Esophagus squamous epithelium (tissue), 5 donors: ENCODE measurements at regions of chr1 and their contacts with region 1.

Region 1: GRCh38 chr1:8987881-8988617 is 38.2 kb downstream of the SLC2A7 start:
- DNase-seq: no peak
- H3K4me3 ChIP-seq: no peak overlapping the region
- H3K27ac ChIP-seq: peak overlapping the region in 1 of 4 donors; percentile 35
- H3K4me1 ChIP-seq: peaks cover 7 to 32% (median 13%) of the 10 kb centered on the region in 3 donors
- H3K27me3 ChIP-seq: no peaks in the 10 kb centered on the region
- CTCF ChIP-seq: peak; percentile 79 to 96 (median 86)
- POLR2A ChIP-seq: no peak

Region 2: DNA sequence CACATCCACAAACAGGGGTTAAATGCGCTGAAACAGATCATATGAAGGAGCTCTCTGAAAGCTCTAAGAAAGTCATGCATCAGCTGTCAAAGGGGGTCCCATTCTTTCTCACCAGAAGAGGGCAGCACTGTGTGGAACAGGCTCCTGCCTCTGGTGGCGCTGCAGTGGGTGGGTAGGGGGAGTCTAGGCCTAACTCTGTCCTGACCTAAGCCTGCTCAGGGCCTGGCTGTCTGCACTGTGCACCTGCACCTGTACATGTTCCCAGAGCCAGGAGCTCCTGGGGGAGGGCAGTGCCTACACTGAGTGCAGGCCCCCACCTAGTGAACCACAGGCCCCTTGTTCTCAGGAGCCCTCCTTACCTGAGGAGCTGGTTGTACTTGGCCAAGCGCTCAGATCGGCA is 125.5 kb before region 1 on chr1:
- intact Hi-C with region 1: loop called (anchors 10 kb)
- DNase-seq: no peak
- H3K4me3 ChIP-seq: no peak overlapping the region
- H3K27ac ChIP-seq: no peak overlapping the region
- H3K4me1 ChIP-seq: peaks cover 0 to 25% (median 11%) of the 10 kb centered on the region in 3 donors
- H3K27me3 ChIP-seq: no peaks in the 10 kb centered on the region
- CTCF ChIP-seq: peak in 5 of 6 experiments; percentile 6 to 41 (median 30)
- POLR2A ChIP-seq: no peak

Region 3: GRCh38 chr1:8915446-8915845 is 72.6 kb before region 1 on chr1:
- intact Hi-C with region 1: loop called (anchors 5 kb)
- DNase-seq: no peak
- H3K4me3 ChIP-seq: no peak overlapping the region
- H3K27ac ChIP-seq: no peak overlapping the region
- H3K4me1 ChIP-seq: peaks cover 0 to 22% (median 10%) of the 10 kb centered on the region in 3 donors
- H3K27me3 ChIP-seq: no peaks in the 10 kb centered on the region
- CTCF ChIP-seq: no peak
- POLR2A ChIP-seq: no peak